Heart left ventricle (tissue), 16 donors: ENCODE measurements at regions of chr15 and their contacts with region 1.

Region 1: DNA sequence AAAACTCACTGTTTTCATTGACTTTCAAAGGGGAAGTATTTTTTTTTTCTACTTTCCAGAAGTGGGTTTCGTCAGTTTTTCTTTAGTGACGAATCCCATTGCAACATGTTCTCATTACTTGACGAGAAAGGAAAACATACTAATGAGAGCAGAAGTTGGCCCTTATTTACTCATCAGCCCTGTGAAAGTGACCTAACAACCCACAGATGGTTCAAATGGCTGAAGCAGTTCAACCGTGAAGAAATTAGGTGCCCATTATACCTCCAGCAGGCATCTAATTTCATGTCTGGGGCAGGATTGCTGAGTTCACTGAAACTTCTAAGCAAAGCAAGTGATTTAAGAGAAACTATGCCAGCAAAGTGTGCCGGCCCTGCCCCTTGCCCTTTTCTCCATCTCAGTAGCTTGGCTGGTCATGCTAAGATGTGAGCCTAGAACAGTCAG is 9.0 kb downstream of the AQP9 start:
- DNase-seq: no peak
- ATAC-seq: peak in 2 of 4 donors; percentile 53 to 55
- H3K4me3 ChIP-seq: no peak overlapping the region
- H3K27ac ChIP-seq: peak overlapping the region in 1 of 12 donors; percentile 93
- H3K4me1 ChIP-seq: peaks cover 0 to 42% (median 0%) of the 10 kb centered on the region in 12 donors
- H3K27me3 ChIP-seq: peaks cover 0 to 9% (median 0%) of the 10 kb centered on the region in 9 donors
- CTCF ChIP-seq: no peak
- POLR2A ChIP-seq: no peak

Region 2: GRCh38 chr15:58171476-58172057 is 24.4 kb after region 1 on chr15:
- intact Hi-C with region 1: loop called in 1 of 10 experiments (anchors 2 kb)
- DNase-seq: no peak
- ATAC-seq: no peak
- H3K4me3 ChIP-seq: no peak overlapping the region
- H3K27ac ChIP-seq: no peak overlapping the region
- H3K4me1 ChIP-seq: peaks cover 0 to 5% (median 0%) of the 10 kb centered on the region in 12 donors
- H3K27me3 ChIP-seq: peaks cover 0 to 14% (median 0%) of the 10 kb centered on the region in 9 donors
- CTCF ChIP-seq: no peak
- POLR2A ChIP-seq: no peak